ENCODE measurements at regions of chr4 and their contacts with region 1.

Region 1: DNA sequence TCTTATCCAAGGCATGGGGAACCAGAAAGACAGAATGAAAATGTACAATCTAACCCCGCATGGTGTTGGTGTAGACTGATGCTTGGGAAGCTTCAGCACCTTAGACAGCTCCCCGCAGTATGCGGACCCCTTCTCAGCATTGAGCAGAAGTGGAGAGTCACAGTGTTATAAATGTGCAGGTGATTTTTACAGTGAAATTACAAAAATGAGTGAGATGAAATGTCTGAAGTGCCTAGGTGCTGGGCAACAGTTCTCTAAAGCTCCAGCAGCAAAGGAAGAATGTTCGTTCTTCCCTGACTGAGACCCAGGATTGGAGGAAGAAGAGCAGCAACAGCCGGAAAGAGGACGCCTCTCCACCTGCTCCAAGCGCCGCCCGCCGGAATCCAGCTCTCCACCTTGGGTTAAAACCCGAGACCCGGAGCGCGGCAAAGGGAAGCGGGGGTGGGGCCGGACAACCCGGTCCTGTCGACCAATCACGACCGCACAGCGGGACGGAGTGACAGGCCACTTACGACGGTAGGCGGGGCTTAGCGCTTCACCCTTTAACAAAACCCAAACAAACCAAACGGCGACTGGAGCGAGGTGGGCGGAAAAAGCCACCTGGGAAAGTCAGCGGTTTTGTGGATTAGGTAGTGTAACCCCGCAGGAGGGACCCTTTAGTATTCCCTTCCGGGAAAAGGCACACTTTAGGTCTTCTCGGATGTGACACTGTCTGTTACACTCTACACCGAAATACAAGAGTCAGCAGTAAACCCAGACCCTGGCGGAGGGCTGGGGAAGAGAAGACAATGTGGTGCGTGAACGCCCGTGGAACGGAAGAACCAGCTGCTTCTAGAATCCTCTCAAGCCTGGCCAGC is at the start of gene GLRA3:
- DNase-seq: no peak
- ATAC-seq: no peak
- H3K4me3 ChIP-seq: no peak within 1 kb of the TSS
- H3K27ac ChIP-seq: no peak within 1 kb of the TSS
- H3K4me1 ChIP-seq: no peaks in the 10 kb centered on the region
- H3K27me3 ChIP-seq: no peaks in the 10 kb centered on the region
- CTCF ChIP-seq: no peak
- POLR2A ChIP-seq: no peak
- RAD21 ChIP-seq: no peak
- total RNA-seq, gene GLRA3: not detected in 2 replicates

Region 2: GRCh38 chr4:174613979-174614378 is 215.1 kb before region 1 on chr4:
- CTCF ChIA-PET with region 1: no interaction called
- POLR2A ChIA-PET with region 1: no interaction called
- dilution Hi-C with region 1: no loop called
- in situ Hi-C with region 1: no loop called
- intact Hi-C with region 1: no loop called
- DNase-seq: no peak
- ATAC-seq: no peak
- H3K4me3 ChIP-seq: no peak overlapping the region
- H3K27ac ChIP-seq: no peak overlapping the region
- H3K4me1 ChIP-seq: no peaks in the 10 kb centered on the region
- H3K27me3 ChIP-seq: no peaks in the 10 kb centered on the region
- CTCF ChIP-seq: no peak
- POLR2A ChIP-seq: no peak
- RAD21 ChIP-seq: no peak

Region 3: GRCh38 chr4:174847801-174848427 is 18.8 kb after region 1 on chr4:
- CTCF ChIA-PET with region 1: no interaction called
- POLR2A ChIA-PET with region 1: no interaction called
- dilution Hi-C with region 1: no loop called
- in situ Hi-C with region 1: no loop called
- intact Hi-C with region 1: loop called (anchors 1 kb)
- DNase-seq: no peak
- ATAC-seq: no peak
- H3K4me3 ChIP-seq: no peak overlapping the region
- H3K27ac ChIP-seq: no peak overlapping the region
- H3K4me1 ChIP-seq: no peaks in the 10 kb centered on the region
- H3K27me3 ChIP-seq: no peaks in the 10 kb centered on the region
- CTCF ChIP-seq: no peak
- POLR2A ChIP-seq: no peak
- RAD21 ChIP-seq: no peak

Region 4: GRCh38 chr4:174882317-174882992 is 53.4 kb after region 1 on chr4:
- CTCF ChIA-PET with region 1: no interaction called
- POLR2A ChIA-PET with region 1: no interaction called
- dilution Hi-C with region 1: no loop called
- in situ Hi-C with region 1: no loop called
- intact Hi-C with region 1: no loop called
- DNase-seq: no peak
- ATAC-seq: no peak
- H3K4me3 ChIP-seq: no peak overlapping the region
- H3K27ac ChIP-seq: no peak overlapping the region
- H3K4me1 ChIP-seq: no peaks in the 10 kb centered on the region
- H3K27me3 ChIP-seq: no peaks in the 10 kb centered on the region
- CTCF ChIP-seq: no peak
- POLR2A ChIP-seq: no peak
- RAD21 ChIP-seq: no peak

Measured in IMR-90 (cell line).